ENCODE measurements at regions of chr11 and their contacts with region 1.

Region 1: GRCh38 chr11:4072668-4073285 is 21.8 kb upstream of the RRM1 start:
- DNase-seq: peak; percentile 51
- ATAC-seq: peak; percentile 95
- H3K4me3 ChIP-seq: no peak overlapping the region
- H3K27ac ChIP-seq: no peak overlapping the region
- H3K4me1 ChIP-seq: no peaks in the 10 kb centered on the region
- H3K27me3 ChIP-seq: no peaks in the 10 kb centered on the region
- CTCF ChIP-seq: peak; percentile 75 to 95 (median 83)
- EP300 ChIP-seq: no peak
- POLR2A ChIP-seq: no peak
- RAD21 ChIP-seq: peak; percentile 98

Region 2: DNA sequence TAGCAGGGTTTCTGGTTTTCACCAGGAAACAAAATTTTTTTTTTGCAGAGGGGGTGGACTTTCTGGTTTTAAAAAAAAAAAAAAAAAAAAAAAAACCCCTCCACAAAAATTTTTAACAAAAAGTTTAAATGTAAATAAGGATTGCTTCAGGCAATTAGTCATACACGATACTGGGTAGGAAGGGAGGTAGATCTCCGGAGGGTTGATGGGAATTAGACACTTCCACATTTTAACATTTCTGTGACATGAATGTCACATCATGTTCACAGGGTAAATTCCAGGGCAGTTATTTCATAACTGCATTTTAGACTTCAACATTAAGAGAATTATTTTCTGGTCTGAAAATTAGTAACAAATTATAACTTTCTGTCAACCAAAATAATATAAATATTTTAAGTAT is 291.4 kb before region 1 on chr11:
- CTCF ChIA-PET with region 1: interaction called, 12 read pairs
- POLR2A ChIA-PET with region 1: no interaction called
- RAD21 ChIA-PET with region 1: no interaction called
- SMC1A ChIA-PET with region 1: interaction called, 5 read pairs
- in situ Hi-C with region 1: no loop called
- intact Hi-C with region 1: no loop called
- DNase-seq: no peak
- ATAC-seq: no peak
- H3K4me3 ChIP-seq: no peak overlapping the region
- H3K27ac ChIP-seq: no peak overlapping the region; the same call in 1 of the 2 replicates
- H3K4me1 ChIP-seq: peaks cover 12% of the 10 kb centered on the region
- H3K27me3 ChIP-seq: no peaks in the 10 kb centered on the region
- CTCF ChIP-seq: no peak
- EP300 ChIP-seq: no peak
- POLR2A ChIP-seq: no peak
- RAD21 ChIP-seq: no peak

Region 3: GRCh38 chr11:3834664-3835461 is 237.9 kb before region 1 on chr11:
- CTCF ChIA-PET with region 1: interaction called, 979 read pairs
- POLR2A ChIA-PET with region 1: interaction called, 3 read pairs
- RAD21 ChIA-PET with region 1: interaction called, 19 read pairs
- SMC1A ChIA-PET with region 1: interaction called, 26 read pairs
- in situ Hi-C with region 1: no loop called
- intact Hi-C with region 1: no loop called
- DNase-seq: no peak
- ATAC-seq: peak; percentile 2; the same call in 1 of the 3 replicates
- H3K4me3 ChIP-seq: peak overlapping the region; percentile 37
- H3K27ac ChIP-seq: peak overlapping the region; percentile 50
- H3K4me1 ChIP-seq: peaks cover 41% of the 10 kb centered on the region
- H3K27me3 ChIP-seq: no peaks in the 10 kb centered on the region
- CTCF ChIP-seq: no peak
- EP300 ChIP-seq: no peak
- POLR2A ChIP-seq: no peak
- RAD21 ChIP-seq: no peak

Region 4: DNA sequence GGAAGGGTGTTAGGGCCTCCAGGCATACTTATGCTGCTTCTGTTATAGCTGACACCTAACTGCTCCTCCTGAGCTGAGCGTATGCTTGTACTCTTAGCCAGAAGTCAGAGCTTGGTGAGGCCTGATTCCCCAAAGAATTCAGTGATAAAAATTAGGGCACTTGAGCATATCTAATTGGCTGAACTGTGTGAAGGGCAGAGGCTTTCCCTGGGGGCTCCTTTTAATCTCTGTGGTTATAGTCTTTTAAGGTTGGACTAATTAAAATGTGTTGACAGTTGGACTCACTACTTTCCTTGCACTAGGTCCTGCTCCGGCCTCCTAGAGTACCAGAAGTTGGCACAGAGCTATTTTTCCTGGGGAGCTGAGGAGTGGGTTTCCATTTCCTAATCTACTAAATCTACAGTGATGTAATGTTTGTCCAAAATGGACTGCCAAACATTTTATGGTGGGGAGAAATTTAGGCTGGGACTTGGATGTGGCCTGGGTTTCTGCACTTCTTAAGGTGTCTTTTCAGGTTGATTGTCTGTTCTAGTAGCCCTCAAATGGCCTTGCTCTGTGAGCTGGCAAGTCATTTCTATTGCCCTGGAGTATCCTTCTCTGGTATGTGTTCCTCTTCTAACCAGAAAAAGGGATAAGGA is 198.9 kb before region 1 on chr11:
- CTCF ChIA-PET with region 1: interaction called, 19 read pairs
- POLR2A ChIA-PET with region 1: no interaction called
- RAD21 ChIA-PET with region 1: interaction called, 6 read pairs
- SMC1A ChIA-PET with region 1: interaction called, 16 read pairs
- in situ Hi-C with region 1: no loop called
- intact Hi-C with region 1: no loop called
- DNase-seq: no peak
- ATAC-seq: no peak
- H3K4me3 ChIP-seq: no peak overlapping the region
- H3K27ac ChIP-seq: no peak overlapping the region
- H3K4me1 ChIP-seq: peaks cover 50% of the 10 kb centered on the region
- H3K27me3 ChIP-seq: no peaks in the 10 kb centered on the region
- CTCF ChIP-seq: no peak
- EP300 ChIP-seq: no peak
- POLR2A ChIP-seq: no peak
- RAD21 ChIP-seq: no peak

Region 5: DNA sequence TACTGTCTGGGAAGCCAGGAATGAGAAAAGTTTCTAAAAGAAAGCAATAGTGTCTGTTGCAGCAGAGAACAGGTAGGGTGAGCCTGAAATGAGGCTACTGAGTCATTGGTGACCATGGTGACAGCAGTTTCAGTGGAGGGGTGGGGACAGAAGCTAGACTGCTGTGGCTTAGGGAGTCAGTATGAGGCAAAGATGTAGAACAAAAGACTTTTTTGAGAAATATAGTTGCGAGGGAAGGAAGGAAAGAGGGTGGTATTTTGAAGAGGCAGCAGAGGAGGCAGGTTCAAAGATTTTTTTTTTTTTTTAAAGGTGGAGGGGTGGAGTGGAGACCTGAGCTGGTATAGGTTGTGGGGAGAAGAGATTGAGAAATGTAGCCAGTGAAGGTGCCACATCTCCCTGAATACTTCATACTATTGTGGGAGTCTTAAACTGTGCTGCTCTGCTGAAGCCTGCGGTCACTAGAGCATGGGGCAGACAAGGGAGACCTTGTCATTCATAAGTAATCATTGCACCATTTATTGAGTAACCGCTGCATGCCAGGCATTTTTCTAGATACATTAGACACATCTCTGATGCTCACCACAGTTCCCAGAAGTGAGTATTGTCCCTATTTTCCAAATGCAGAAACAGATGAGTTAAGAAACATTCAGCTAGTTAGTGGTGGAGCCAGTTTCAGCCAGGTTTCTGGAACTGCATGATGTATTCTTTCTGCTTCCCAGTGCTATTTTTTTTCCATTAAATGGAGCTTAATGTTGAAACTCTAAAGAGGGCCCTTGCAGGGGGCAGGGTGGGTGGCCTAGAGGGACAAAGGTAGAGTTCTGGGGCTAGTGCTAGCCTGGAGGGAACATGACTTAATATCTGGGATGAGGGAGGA is 167.5 kb before region 1 on chr11:
- CTCF ChIA-PET with region 1: interaction called, 14 read pairs
- POLR2A ChIA-PET with region 1: no interaction called
- RAD21 ChIA-PET with region 1: interaction called, 9 read pairs
- SMC1A ChIA-PET with region 1: interaction called, 11 read pairs
- in situ Hi-C with region 1: no loop called
- intact Hi-C with region 1: no loop called
- DNase-seq: no peak
- ATAC-seq: peak; percentile 89
- H3K4me3 ChIP-seq: no peak overlapping the region
- H3K27ac ChIP-seq: no peak overlapping the region
- H3K4me1 ChIP-seq: peaks cover 51% of the 10 kb centered on the region
- H3K27me3 ChIP-seq: no peaks in the 10 kb centered on the region
- CTCF ChIP-seq: no peak
- EP300 ChIP-seq: no peak
- POLR2A ChIP-seq: no peak
- RAD21 ChIP-seq: no peak

Region 6: DNA sequence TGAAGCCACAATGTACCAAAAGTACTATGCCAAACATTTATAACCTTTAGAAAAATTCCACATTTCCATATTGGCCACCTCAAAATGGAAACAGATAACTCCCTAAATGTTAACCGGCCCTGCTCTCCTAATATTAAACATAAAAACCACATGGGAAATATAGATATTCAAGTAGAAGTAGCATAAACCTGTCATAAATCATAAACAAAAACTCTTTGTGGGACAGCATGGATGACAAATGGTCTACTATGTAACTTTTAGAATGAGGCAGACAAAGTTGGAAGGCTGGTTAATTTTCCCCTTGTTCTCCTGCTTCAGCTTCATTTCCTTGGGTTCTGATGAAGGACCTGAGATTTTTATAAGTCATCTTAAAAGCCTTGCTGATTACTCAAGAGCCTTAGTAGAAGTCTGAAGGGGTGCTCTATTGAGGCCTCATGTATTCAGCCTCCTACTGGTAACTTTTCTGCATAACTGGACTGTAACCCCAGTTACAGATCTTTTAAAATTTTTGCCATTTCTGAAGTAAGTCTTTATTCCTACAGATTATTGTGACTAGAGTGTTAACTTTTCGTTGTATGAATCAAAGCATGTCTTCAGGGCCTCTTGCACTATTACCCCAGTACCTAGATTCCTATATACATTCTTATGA is 100.9 kb before region 1 on chr11:
- CTCF ChIA-PET with region 1: interaction called, 15 read pairs
- POLR2A ChIA-PET with region 1: interaction called, 3 read pairs
- RAD21 ChIA-PET with region 1: interaction called, 4 read pairs
- SMC1A ChIA-PET with region 1: interaction called, 16 read pairs
- in situ Hi-C with region 1: no loop called
- intact Hi-C with region 1: no loop called
- DNase-seq: no peak
- ATAC-seq: peak; percentile 62
- H3K4me3 ChIP-seq: no peak overlapping the region
- H3K27ac ChIP-seq: no peak overlapping the region
- H3K4me1 ChIP-seq: peaks cover 4% of the 10 kb centered on the region; the same call in 1 of the 2 replicates
- H3K27me3 ChIP-seq: no peaks in the 10 kb centered on the region
- CTCF ChIP-seq: 0 out of 6 replicates have a peak, but pooled peaks of 1 of the 3 experiments have one; percentile 12
- EP300 ChIP-seq: no peak
- POLR2A ChIP-seq: no peak
- RAD21 ChIP-seq: no peak; the same call in 1 of the 2 replicates

Region 7: GRCh38 chr11:4087551-4087950 is 14.8 kb after region 1 on chr11:
- CTCF ChIA-PET with region 1: interaction called, 24 read pairs
- POLR2A ChIA-PET with region 1: no interaction called
- RAD21 ChIA-PET with region 1: interaction called, 5 read pairs
- SMC1A ChIA-PET with region 1: interaction called, 13 read pairs
- in situ Hi-C with region 1: no loop called
- intact Hi-C with region 1: no loop called
- DNase-seq: no peak
- ATAC-seq: no peak
- H3K4me3 ChIP-seq: no peak overlapping the region
- H3K27ac ChIP-seq: no peak overlapping the region
- H3K4me1 ChIP-seq: peaks cover 8% of the 10 kb centered on the region
- H3K27me3 ChIP-seq: no peaks in the 10 kb centered on the region
- CTCF ChIP-seq: no peak
- EP300 ChIP-seq: no peak
- POLR2A ChIP-seq: no peak
- RAD21 ChIP-seq: no peak

Region 8: DNA sequence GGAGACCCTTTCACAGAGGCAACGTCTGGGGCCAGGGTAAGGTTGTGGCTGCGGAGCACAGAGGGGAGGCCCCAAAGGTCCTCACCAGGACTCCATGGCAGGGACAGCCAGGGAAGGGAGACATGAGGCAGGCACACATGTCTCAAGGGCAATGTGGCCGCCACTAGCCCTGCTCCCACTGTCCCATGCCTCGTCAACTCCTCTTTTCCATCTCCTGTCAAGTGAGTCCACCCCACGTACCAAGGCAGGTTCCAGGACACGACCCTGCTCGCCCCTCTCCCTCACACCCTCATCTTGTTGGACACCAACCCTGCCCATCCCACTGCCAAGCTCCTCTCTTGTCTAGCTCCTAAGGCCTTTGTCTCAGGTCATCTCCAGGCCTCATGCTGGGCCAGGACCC is 95.0 kb after region 1 on chr11:
- CTCF ChIA-PET with region 1: no interaction called
- POLR2A ChIA-PET with region 1: no interaction called
- RAD21 ChIA-PET with region 1: no interaction called
- SMC1A ChIA-PET with region 1: no interaction called
- in situ Hi-C with region 1: no loop called
- intact Hi-C with region 1: no loop called
- DNase-seq: no peak
- ATAC-seq: no peak
- H3K4me3 ChIP-seq: no peak overlapping the region
- H3K27ac ChIP-seq: no peak overlapping the region
- H3K4me1 ChIP-seq: no peaks in the 10 kb centered on the region
- H3K27me3 ChIP-seq: no peaks in the 10 kb centered on the region
- CTCF ChIP-seq: no peak
- EP300 ChIP-seq: no peak
- POLR2A ChIP-seq: no peak
- RAD21 ChIP-seq: no peak

Region 9: DNA sequence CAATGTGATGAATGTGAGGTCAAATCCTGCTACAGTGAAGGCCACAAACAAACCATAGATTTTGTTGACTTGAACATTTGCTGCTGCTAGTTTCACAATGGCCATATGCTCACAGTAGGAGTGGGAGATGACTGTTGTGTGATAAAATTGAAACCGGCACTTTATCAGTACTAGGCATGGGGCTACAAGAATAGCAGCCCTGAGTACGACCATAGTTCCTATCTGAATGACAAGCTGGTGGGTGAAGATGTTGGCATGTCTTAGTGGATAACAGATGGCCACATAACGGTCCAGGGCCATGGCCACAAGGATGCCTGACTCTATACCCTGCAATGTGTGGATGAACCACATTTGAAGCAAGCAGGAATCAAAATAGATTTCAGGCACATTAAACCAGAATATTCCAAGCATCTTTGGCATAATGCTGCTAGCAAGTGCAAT is 1079.0 kb after region 1 on chr11:
- CTCF ChIA-PET with region 1: no interaction called
- POLR2A ChIA-PET with region 1: no interaction called
- RAD21 ChIA-PET with region 1: no interaction called
- SMC1A ChIA-PET with region 1: no interaction called
- in situ Hi-C with region 1: no loop called
- intact Hi-C with region 1: no loop called
- DNase-seq: no peak
- ATAC-seq: no peak
- H3K4me3 ChIP-seq: no peak overlapping the region
- H3K27ac ChIP-seq: no peak overlapping the region
- H3K4me1 ChIP-seq: no peaks in the 10 kb centered on the region
- H3K27me3 ChIP-seq: no peaks in the 10 kb centered on the region
- CTCF ChIP-seq: no peak
- EP300 ChIP-seq: no peak
- POLR2A ChIP-seq: no peak
- RAD21 ChIP-seq: no peak